H1 (cell line): ENCODE measurements at regions of chr14 and their contacts with region 1.

Region 1: DNA sequence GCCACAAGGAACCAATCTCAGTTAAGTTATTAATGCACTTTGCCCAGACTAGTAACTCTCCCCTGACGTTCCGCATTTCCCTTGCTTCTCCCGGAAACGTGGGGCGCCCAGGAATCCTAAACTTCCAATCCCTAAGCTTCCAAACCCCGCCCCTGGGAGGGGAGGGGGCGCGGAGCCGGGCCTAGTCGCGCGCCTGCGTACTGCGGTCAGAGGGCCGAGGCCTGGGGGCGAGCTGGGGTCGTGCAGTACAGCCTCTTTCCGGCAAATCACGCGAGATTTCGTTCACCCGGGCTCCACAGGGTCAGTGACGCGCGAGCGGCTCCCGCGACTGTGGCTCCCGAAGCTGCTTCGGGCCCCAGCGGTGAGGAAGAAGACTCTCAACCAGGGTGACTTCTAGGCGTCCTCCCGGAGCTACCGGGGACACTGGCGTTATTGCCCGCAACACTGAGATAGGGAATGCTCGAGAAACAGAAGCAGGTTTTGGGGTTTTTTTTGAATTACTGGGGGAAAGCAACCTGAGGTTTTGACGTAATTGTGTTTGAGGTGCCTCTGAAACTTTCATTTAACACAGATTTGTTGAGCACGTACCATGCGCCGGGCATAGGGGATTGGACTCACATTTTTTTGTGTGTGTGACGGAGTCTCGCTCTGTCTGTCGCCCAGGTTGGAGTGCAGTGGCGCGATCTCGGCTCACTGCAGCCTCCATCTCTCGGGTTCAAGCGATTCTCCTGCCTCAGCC is at the start of gene PTGR2:
- DNase-seq: peak; percentile 91 to 98
- H3K4me3 ChIP-seq: peak within 1 kb of the TSS; percentile 77 to 94 (median 90)
- H3K27ac ChIP-seq: peak within 1 kb of the TSS; percentile 88
- H3K4me1 ChIP-seq: peaks cover 0 to 6% (median 4%) of the 10 kb centered on the region in 4 experiments; a peak in 3 of 7 replicates
- H3K27me3 ChIP-seq: no peaks in the 10 kb centered on the region
- CTCF ChIP-seq: peak in 2 of 3 experiments; percentile 0 to 11; a peak in 1 of 4 replicates
- EP300 ChIP-seq: no peak
- POLR2A ChIP-seq: peak; percentile 68 to 90
- RAD21 ChIP-seq: no peak
- total RNA-seq, gene PTGR2: 14.0 and 17.5 TPM in 2 replicates

Region 2: DNA sequence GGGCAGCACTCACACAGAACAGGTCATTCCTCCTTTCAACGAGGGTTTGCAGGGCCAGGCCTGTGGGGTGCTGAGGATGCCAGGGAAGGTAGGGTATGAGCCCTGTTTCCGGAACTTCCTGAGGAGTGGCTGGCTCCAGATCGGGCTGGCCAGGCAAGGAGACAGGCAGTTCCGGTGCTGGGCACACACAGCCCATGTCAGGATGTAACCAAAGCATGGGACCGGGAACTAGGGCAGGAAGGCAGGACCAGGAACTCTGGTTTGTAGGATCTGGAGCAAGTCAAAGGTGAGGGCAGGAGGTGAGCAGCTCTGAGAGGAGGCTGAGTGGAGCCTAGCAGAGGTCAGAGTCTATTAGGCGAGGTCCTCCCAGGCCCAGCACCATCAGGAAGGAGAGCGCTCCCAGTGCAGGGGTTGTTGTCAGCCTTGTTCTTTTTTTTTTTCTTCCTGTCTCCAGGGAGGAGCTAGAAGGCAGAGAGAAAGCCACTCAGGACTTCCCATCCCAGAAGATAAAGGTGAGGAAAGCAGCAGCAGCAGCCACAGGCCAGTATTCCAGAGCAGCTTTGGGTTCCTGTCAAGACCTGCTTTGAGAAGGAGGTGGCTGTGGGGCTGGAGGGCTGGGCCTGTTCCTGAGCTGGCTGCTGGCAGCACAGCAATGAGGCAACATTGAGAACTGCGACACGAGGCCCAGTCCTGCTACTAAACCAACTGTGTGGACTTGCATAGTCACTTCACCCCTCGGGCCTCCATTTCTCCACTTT is 49.2 kb before region 1 on chr14:
- CTCF ChIA-PET with region 1: no interaction called
- POLR2A ChIA-PET with region 1: no interaction called
- DNase-seq: no peak
- H3K4me3 ChIP-seq: no peak overlapping the region
- H3K27ac ChIP-seq: no peak overlapping the region
- H3K4me1 ChIP-seq: no peaks in the 10 kb centered on the region
- H3K27me3 ChIP-seq: no peaks in the 10 kb centered on the region
- CTCF ChIP-seq: no peak
- EP300 ChIP-seq: no peak
- POLR2A ChIP-seq: no peak
- RAD21 ChIP-seq: no peak

Region 3: GRCh38 chr14:73833530-73834257 is 18.1 kb before region 1 on chr14:
- CTCF ChIA-PET with region 1: interaction called, 3 read pairs
- POLR2A ChIA-PET with region 1: interaction called, 13 read pairs
- DNase-seq: no peak
- H3K4me3 ChIP-seq: no peak overlapping the region
- H3K27ac ChIP-seq: no peak overlapping the region; the same call in 1 of the 2 replicates
- H3K4me1 ChIP-seq: peaks cover 6 to 12% (median 10%) of the 10 kb centered on the region in 4 experiments; a peak in 6 of 7 replicates
- H3K27me3 ChIP-seq: no peaks in the 10 kb centered on the region
- CTCF ChIP-seq: no peak
- EP300 ChIP-seq: no peak
- POLR2A ChIP-seq: no peak
- RAD21 ChIP-seq: no peak

Region 4: DNA sequence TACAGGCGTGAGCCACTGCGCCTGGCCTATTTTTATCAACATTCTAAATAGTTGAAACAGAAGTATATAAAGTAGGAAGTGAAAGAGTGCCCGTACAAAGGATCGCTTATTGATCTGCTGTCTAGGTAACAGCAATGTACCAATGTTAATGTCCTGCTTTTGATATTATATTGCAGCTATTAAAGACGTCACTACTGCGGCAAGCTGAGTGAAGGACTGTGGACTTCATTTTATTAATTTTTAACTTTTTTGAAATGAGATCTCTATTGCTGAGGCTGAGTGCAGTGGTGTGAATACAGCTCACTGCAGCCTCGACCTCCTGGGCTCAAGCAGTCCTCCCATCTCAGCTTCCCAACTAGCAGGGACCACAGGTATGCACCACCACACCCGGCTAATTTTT is 10.7 kb after region 1 on chr14:
- CTCF ChIA-PET with region 1: interaction called, 6 read pairs
- POLR2A ChIA-PET with region 1: interaction called, 33 read pairs
- DNase-seq: no peak
- H3K4me3 ChIP-seq: no peak overlapping the region
- H3K27ac ChIP-seq: no peak overlapping the region
- H3K4me1 ChIP-seq: no peaks in the 10 kb centered on the region
- H3K27me3 ChIP-seq: no peaks in the 10 kb centered on the region
- CTCF ChIP-seq: no peak
- EP300 ChIP-seq: no peak
- POLR2A ChIP-seq: no peak
- RAD21 ChIP-seq: no peak

Region 5: DNA sequence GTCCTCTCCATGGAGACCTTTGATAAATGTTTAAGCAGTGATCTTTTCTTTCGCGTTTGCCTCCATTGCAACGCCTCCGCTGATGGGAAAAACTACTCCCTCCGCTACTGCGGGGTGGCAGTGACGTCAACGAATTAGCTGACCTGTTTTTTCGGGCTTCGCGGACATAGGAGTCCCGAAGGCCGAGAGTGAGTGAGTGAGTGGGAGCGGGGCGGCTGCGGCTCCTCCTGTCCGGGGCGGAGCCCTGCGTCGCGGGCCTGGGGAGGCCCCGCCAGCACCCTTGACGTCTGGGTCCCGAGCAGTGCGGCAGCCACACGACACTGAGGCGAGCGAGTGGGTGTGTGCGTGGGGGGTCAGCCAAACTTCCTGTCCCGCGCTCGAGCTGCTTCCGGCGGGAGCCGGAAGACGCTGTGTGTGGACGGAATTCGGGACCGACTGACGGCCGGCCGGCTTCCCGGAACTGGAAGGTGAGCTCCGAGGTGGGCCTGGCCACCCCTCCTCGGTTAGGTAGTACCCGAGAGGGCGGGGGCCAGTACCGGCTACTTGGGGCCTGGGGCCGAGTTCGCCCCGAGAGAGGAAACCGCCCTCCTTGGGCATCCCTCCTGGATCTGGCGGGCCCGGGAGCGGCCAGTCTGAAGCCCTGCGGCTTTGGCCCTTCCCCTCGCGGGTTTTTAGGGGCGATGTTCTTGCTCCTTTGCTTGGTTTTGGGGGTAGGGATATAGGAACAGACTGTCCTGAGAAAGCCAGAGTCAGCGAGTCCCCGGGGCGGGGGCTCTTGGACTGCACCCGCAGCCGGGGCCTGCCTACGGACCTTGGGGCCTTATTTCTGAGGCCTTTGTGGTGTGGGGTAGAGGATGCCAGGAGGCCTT is 34.9 kb after region 1 on chr14 and contains the start of gene ZNF410:
- CTCF ChIA-PET with region 1: interaction called, 3 read pairs
- POLR2A ChIA-PET with region 1: interaction called, 18 read pairs
- DNase-seq: peak; percentile 70 to 86
- H3K4me3 ChIP-seq: peak within 1 kb of the TSS; percentile 90 to 98 (median 93)
- H3K27ac ChIP-seq: peak within 1 kb of the TSS; percentile 65; the same call in 1 of the 2 replicates
- H3K4me1 ChIP-seq: peaks cover 0 to 2% (median 0%) of the 10 kb centered on the region in 4 experiments; a peak in 1 of 7 replicates
- H3K27me3 ChIP-seq: no peaks in the 10 kb centered on the region
- CTCF ChIP-seq: no peak
- EP300 ChIP-seq: no peak
- POLR2A ChIP-seq: peak; percentile 38 to 60
- RAD21 ChIP-seq: no peak
- total RNA-seq, gene ZNF410: 18.9 and 19.1 TPM in 2 replicates